ENCODE measurements at regions of chr7 and their contacts with region 1.

Region 1: GRCh38 chr7:139505563-139505962 is 17.9 kb upstream of the CLEC2L start:
- DNase-seq: no peak
- H3K4me3 ChIP-seq: no peak overlapping the region
- H3K27ac ChIP-seq: no peak overlapping the region
- H3K4me1 ChIP-seq: peaks cover 0 to under 1% (median 0%) of the 10 kb centered on the region in 4 donors
- H3K27me3 ChIP-seq: no peaks in the 10 kb centered on the region
- CTCF ChIP-seq: peak in 1 of 5 experiments; percentile 8
- EP300 ChIP-seq: no peak
- POLR2A ChIP-seq: no peak

Region 2: GRCh38 chr7:139626817-139627216 is 121.3 kb after region 1 on chr7:
- in situ Hi-C with region 1: no loop called
- intact Hi-C with region 1: loop called (anchors 2 kb)
- DNase-seq: no peak
- H3K4me3 ChIP-seq: no peak overlapping the region
- H3K27ac ChIP-seq: no peak overlapping the region
- H3K4me1 ChIP-seq: no peaks in the 10 kb centered on the region
- H3K27me3 ChIP-seq: no peaks in the 10 kb centered on the region
- CTCF ChIP-seq: no peak
- EP300 ChIP-seq: no peak
- POLR2A ChIP-seq: no peak

Measured in transverse colon (tissue), 4 donors.